Sciatic nerve (tissue), 2 donors: ENCODE measurements at regions of chr16 and their contacts with region 1.

Region 1: DNA sequence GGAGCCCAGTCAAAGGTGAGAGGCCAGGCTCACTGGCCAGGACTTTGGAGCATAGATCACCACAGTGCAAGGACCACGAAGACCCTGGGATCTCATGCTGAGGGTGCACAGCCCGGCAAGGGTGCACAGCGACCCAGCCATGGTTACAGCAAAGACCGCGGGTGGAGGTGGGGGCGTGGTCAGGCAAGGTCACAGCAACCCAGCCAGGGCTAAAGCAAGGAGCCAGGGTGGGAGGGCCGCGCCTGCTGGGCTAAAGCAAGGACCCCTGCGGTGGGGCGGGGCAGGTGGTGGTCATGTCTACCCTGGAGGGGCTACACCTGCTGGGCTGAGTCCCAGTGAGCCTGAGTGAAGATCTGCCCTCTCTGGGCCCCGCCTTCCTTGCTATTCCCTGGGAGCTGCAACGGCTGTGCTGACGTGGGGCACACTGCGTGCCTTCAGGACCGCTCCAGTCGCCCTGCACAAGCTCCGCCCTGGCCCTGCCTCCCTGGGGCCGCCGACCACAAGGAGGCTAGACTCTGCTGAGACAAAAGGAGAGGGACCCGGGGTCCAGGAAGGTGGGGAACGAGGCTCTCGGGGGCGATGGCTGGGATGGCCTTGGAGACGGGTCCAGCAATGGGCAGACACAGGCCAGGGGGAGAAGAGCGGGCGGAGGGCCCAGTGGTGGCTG is 53.0 kb downstream of the CBFA2T3 start:
- DNase-seq: no peak
- ATAC-seq: peak; percentile 10

Region 2: GRCh38 chr16:88685156-88686061 is 238.6 kb before region 1 on chr16:
- intact Hi-C with region 1: no loop called
- DNase-seq: no peak
- ATAC-seq: peak; percentile 17

Region 3: GRCh38 chr16:88876942-88877526 is 47.0 kb before region 1 on chr16:
- intact Hi-C with region 1: loop called (anchors 1 kb)
- DNase-seq: no peak
- ATAC-seq: no peak